ENCODE measurements at regions of chr5 and their contacts with region 1.

Region 1: DNA sequence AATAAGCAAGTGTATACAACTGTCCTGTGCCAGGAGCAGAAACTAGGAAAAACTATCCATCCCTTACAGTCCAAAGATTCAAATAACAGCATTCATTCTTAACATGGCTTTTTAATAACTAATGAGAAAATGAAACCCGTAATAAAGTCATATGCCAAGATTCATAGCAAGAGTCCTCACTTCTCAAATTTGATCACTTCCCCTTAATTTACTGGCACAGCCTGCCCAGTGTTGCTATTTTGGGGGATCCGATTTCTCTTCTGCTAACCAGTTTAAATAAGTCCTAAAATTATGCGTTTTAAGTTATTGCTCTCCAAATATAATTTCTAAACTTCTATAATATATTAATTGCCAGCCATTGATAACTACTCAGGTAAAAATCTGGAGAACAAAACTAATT is 177.0 kb upstream of the PTGER4 start:
- DNase-seq: peak; percentile 67
- ATAC-seq: peak; percentile 68
- H3K4me3 ChIP-seq: peak overlapping the region in 3 of 5 experiments; percentile 12 to 51 (median 30)
- H3K4me3 Mint-ChIP-seq: no peak overlapping the region
- H3K27ac ChIP-seq: peak overlapping the region in 1 of 2 donors; percentile 60
- H3K27ac Mint-ChIP-seq: no peak overlapping the region
- H3K4me1 ChIP-seq: peaks cover 14 to 17% of the 10 kb centered on the region in 2 donors
- H3K4me1 Mint-ChIP-seq: peaks cover 6% of the 10 kb centered on the region
- H3K27me3 ChIP-seq: no peaks in the 10 kb centered on the region
- H3K27me3 Mint-ChIP-seq: no peaks in the 10 kb centered on the region
- CTCF ChIP-seq: no peak

Region 2: GRCh38 chr5:40367255-40367654 is 135.5 kb before region 1 on chr5:
- CTCF ChIA-PET with region 1: no interaction called
- POLR2A ChIA-PET with region 1: no interaction called
- intact Hi-C with region 1: loop called (anchors 5 kb)
- DNase-seq: peak; percentile 45
- ATAC-seq: no peak
- H3K4me3 ChIP-seq: no peak overlapping the region
- H3K4me3 Mint-ChIP-seq: no peak overlapping the region
- H3K27ac ChIP-seq: no peak overlapping the region
- H3K27ac Mint-ChIP-seq: peak overlapping the region; percentile 23
- H3K4me1 ChIP-seq: peaks cover 3 to 4% of the 10 kb centered on the region in 2 donors
- H3K4me1 Mint-ChIP-seq: peaks cover 11% of the 10 kb centered on the region
- H3K27me3 ChIP-seq: no peaks in the 10 kb centered on the region
- H3K27me3 Mint-ChIP-seq: no peaks in the 10 kb centered on the region
- CTCF ChIP-seq: no peak

Measured in B cell (primary cell).